Heart left ventricle (tissue), 16 donors: ENCODE measurements at regions of chr3 and their contacts with region 1.

Region 1: DNA sequence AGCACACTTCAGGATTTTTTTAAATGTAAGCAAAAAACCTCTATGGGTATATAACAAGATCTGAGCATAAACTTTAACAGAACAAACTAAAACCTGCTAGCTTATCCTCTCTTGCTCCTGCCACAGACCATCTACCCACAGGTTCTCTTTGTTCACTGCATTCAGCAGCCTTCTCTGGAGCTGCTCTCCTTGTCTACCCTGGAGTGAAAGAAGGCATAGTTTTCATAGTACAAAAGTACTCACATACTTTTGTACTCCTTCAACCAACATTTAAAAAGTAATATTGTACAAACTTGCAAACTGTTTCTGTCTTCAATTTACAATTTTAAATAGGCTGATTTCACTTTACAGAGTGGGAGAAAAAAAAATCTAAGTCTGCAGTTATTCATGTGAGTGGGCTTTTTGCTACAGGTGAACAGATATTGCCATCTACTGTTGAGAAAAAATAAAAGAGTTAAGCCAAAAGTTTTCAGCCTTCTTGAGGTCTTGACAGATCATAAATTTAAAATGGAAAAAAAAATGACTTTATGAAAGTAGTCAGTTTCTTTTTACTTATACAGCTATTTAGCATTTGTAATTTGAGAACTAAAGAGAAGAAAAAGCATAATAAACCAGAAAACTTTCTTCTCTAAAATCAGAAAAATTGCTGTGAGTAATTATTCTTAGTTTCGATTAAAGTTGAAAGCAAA is 20.4 kb downstream of the TERC start:
- DNase-seq: no peak
- ATAC-seq: no peak
- H3K4me3 ChIP-seq: no peak overlapping the region
- H3K27ac ChIP-seq: no peak overlapping the region
- H3K4me1 ChIP-seq: peaks cover 0 to 4% (median 0%) of the 10 kb centered on the region in 12 donors
- H3K27me3 ChIP-seq: peaks cover 0 to 12% (median 3%) of the 10 kb centered on the region in 9 donors
- CTCF ChIP-seq: peak; percentile 25 to 64 (median 49)
- POLR2A ChIP-seq: no peak

Region 2: GRCh38 chr3:168865022-168865551 is 879.4 kb before region 1 on chr3:
- intact Hi-C with region 1: loop called in 5 of 10 experiments (anchors 5 to 10 kb)
- DNase-seq: no peak
- ATAC-seq: no peak
- H3K4me3 ChIP-seq: peak overlapping the region in 4 of 12 donors; percentile 5 to 35 (median 17)
- H3K27ac ChIP-seq: no peak overlapping the region
- H3K4me1 ChIP-seq: no peaks in the 10 kb centered on the region
- H3K27me3 ChIP-seq: no peaks in the 10 kb centered on the region
- CTCF ChIP-seq: peak; percentile 61 to 90 (median 77)
- POLR2A ChIP-seq: no peak

Region 3: GRCh38 chr3:168952551-168952950 is 792.0 kb before region 1 on chr3:
- intact Hi-C with region 1: loop called in 2 of 10 experiments (anchors 10 kb)
- DNase-seq: no peak
- ATAC-seq: no peak
- H3K4me3 ChIP-seq: no peak overlapping the region
- H3K27ac ChIP-seq: no peak overlapping the region
- H3K4me1 ChIP-seq: no peaks in the 10 kb centered on the region
- H3K27me3 ChIP-seq: no peaks in the 10 kb centered on the region
- CTCF ChIP-seq: peak in 7 of 12 donors; percentile 11 to 42 (median 25)
- POLR2A ChIP-seq: no peak

Region 4: DNA sequence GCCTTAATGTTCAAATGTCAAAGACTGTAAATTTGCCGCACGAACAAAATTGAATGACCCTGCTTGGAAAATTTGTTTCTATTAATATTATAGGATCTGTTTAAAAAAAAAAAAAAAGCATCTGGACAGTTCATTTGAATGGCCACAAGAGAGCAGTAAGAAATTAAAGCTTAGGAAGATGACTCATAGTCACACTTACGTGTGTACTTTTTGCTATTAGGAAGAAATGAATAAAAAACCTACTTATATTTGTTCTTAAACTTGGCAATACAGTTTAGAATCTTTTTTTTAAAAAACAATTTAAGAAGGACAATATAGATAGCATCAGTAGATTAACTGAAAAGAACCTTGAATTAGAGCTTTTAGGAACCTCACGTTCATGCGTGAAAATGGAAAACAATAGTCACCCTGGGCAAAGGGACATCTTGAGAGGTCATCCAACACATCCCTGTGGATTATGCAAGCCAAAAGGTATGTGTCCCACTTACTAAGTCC is 702.8 kb before region 1 on chr3:
- intact Hi-C with region 1: loop called in 3 of 10 experiments (anchors 2 to 10 kb)
- DNase-seq: no peak
- ATAC-seq: peak in 2 of 4 donors; percentile 64 to 68
- H3K4me3 ChIP-seq: peak overlapping the region in 5 of 12 donors; percentile 13 to 30 (median 15)
- H3K27ac ChIP-seq: peak overlapping the region in 5 of 12 donors; percentile 19 to 54 (median 34)
- H3K4me1 ChIP-seq: peaks cover 0 to 6% (median 0%) of the 10 kb centered on the region in 12 donors
- H3K27me3 ChIP-seq: no peaks in the 10 kb centered on the region
- CTCF ChIP-seq: peak; percentile 40 to 73 (median 57)
- POLR2A ChIP-seq: no peak

Region 5: DNA sequence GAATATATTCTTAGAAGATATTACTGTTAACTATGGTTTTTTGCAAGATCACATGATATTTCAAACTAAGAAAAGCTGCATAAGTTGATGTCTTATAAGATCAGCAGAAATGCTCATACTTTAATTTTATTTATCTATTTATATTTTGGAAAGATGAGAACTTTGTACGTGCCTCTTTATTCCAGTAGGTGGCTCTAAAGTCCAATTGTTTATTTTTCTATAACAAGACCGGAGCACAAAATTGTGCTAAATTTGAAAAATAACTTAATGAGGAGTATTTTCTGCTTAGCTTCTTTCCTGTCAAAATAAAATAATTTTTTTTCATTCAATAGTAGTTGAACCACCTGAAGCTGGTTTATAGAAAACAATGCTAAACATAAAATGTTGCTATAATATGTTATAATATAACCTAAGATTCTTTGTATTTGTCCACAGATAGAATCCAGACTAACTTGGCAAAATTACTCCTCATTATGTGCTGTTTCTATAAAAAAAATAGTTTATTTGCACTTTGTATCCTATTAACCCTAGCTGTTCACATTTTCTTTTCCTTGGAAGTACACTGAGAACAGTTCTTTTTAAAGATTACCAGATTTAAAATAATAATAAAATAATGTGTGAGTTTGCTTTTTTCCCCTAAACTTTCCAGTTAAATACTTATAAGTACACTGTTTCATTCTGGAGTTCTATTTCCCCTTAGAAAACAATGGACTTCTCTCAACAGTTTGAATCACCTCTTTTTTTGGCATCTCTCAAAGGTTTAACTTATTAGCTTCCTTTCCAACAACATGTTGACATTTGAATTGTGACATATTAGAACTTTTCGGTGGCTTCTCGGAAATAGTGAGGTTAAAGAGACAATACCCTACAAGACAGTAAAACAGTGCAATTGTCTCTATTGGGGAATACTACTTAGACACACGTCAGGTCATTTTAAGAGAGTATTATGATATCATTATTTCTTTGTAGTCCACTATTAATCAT is 611.0 kb before region 1 on chr3:
- intact Hi-C with region 1: loop called in 3 of 10 experiments (anchors 5 to 10 kb)
- DNase-seq: no peak
- ATAC-seq: peak in 3 of 4 donors; percentile 46 to 78 (median 55)
- H3K4me3 ChIP-seq: peak overlapping the region in 1 of 12 donors; percentile 9
- H3K27ac ChIP-seq: peak overlapping the region in 7 of 12 donors; percentile 6 to 61 (median 33)
- H3K4me1 ChIP-seq: peaks cover 0 to 47% (median 3%) of the 10 kb centered on the region in 12 donors
- H3K27me3 ChIP-seq: peaks cover 0 to 10% (median 0%) of the 10 kb centered on the region in 9 donors
- CTCF ChIP-seq: peak; percentile 19 to 63 (median 50)
- POLR2A ChIP-seq: no peak